Vagina (tissue), 2 donors: ENCODE measurements at regions of chr3 and their contacts with region 1.

Region 1: DNA sequence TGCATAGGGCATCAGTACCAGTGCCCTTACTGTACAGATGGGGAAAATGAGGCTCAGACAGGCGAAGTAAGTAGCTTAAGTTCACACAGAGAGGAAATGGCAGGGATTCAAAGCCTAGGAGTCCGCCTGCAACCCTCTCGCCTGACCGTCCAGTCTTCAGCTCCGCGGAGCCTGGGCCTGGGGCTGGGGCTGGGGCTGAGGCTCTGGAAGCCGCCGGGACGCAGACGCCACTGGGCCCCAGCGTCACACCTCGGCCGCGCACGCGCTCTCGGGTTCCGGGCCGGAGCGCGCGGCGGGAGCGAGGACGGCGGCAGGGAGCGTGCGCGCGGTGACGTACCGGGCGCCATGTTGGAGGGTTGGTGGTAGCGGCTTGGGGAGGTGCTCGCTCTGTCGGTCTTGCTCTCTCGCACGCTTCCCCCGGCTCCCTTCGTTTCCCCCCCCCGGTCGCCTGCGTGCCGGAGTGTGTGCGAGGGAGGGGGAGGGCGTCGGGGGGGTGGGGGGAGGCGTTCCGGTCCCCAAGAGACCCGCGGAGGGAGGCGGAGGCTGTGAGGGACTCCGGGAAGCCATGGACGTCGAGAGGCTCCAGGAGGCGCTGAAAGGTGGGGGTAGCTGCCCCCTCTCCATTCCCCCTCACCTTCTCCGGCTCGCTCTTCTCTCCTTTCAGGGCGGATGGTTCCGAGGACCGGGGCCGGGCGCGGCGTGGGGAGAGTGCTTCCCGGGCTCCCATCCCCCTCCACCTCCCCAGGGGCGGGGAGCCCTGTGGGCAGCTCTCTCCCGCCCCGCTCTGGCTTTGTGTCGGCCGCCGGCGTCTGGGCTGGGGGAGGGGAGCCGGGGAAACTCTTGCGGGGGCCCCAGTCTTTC is at the start of gene PPP4R2:
- DNase-seq: peak in 1 of 2 donors; percentile 91
- H3K4me3 ChIP-seq: peak within 1 kb of the TSS; percentile 69 to 78
- H3K27ac ChIP-seq: peak within 1 kb of the TSS; percentile 97
- H3K4me1 ChIP-seq: peaks cover 49% of the 10 kb centered on the region
- H3K27me3 ChIP-seq: no peaks in the 10 kb centered on the region
- CTCF ChIP-seq: peak in 1 of 3 experiments; percentile 3
- POLR2A ChIP-seq: peak; percentile 21 to 92
- total RNA-seq, gene PPP4R2: 24.3 TPM

Region 2: GRCh38 chr3:72847751-72848702 is 148.7 kb before region 1 on chr3 and contains the start of gene SHQ1:
- intact Hi-C with region 1: loop called (anchors 2 kb)
- DNase-seq: peak in 1 of 2 donors; percentile 93
- H3K4me3 ChIP-seq: peak within 1 kb of the TSS; percentile 74 to 85
- H3K27ac ChIP-seq: peak within 1 kb of the TSS; percentile 70
- H3K4me1 ChIP-seq: peaks cover 21% of the 10 kb centered on the region
- H3K27me3 ChIP-seq: no peaks in the 10 kb centered on the region
- CTCF ChIP-seq: no peak
- POLR2A ChIP-seq: no peak
- total RNA-seq, gene SHQ1: 12.3 TPM

Region 3: GRCh38 chr3:72896996-72897757 is 99.5 kb before region 1 on chr3:
- intact Hi-C with region 1: loop called (anchors 1 kb)
- DNase-seq: no peak
- H3K4me3 ChIP-seq: no peak overlapping the region
- H3K27ac ChIP-seq: peak overlapping the region; percentile 20
- H3K4me1 ChIP-seq: peaks cover 28% of the 10 kb centered on the region
- H3K27me3 ChIP-seq: no peaks in the 10 kb centered on the region
- CTCF ChIP-seq: no peak
- POLR2A ChIP-seq: no peak